Activated CD4-positive, alpha-beta memory T cell treated with anti-CD3 and anti-CD28 coated beads, Interleukin-2, amount 10 ng/mL, durations not matched to agents 7 days and 5 days (primary cell): ENCODE measurements at regions of chr1 and their contacts with region 1.

Region 1: GRCh38 chr1:67760030-67760821 is 73.0 kb downstream of the GNG12 start:
- DNase-seq: peak; percentile 56
- H3K4me3 Mint-ChIP-seq: no peak overlapping the region
- H3K27ac Mint-ChIP-seq: no peak overlapping the region
- H3K4me1 Mint-ChIP-seq: no peaks in the 10 kb centered on the region
- H3K27me3 Mint-ChIP-seq: peaks cover 29% of the 10 kb centered on the region

Region 2: GRCh38 chr1:67535474-67535873 is 224.8 kb before region 1 on chr1:
- CTCF ChIA-PET with region 1: interaction called, 61 read pairs
- POLR2A ChIA-PET with region 1: interaction called, 4 read pairs
- DNase-seq: peak; percentile 60
- H3K4me3 Mint-ChIP-seq: no peak overlapping the region
- H3K27ac Mint-ChIP-seq: no peak overlapping the region
- H3K4me1 Mint-ChIP-seq: peaks cover 6% of the 10 kb centered on the region
- H3K27me3 Mint-ChIP-seq: no peaks in the 10 kb centered on the region

Region 3: GRCh38 chr1:67674260-67675011 is 85.8 kb before region 1 on chr1:
- CTCF ChIA-PET with region 1: interaction called, 10 read pairs
- POLR2A ChIA-PET with region 1: no interaction called
- DNase-seq: peak; percentile 58
- H3K4me3 Mint-ChIP-seq: no peak overlapping the region
- H3K27ac Mint-ChIP-seq: peak overlapping the region; percentile 63
- H3K4me1 Mint-ChIP-seq: peaks cover 23% of the 10 kb centered on the region
- H3K27me3 Mint-ChIP-seq: peaks cover 26% of the 10 kb centered on the region

Region 4: DNA sequence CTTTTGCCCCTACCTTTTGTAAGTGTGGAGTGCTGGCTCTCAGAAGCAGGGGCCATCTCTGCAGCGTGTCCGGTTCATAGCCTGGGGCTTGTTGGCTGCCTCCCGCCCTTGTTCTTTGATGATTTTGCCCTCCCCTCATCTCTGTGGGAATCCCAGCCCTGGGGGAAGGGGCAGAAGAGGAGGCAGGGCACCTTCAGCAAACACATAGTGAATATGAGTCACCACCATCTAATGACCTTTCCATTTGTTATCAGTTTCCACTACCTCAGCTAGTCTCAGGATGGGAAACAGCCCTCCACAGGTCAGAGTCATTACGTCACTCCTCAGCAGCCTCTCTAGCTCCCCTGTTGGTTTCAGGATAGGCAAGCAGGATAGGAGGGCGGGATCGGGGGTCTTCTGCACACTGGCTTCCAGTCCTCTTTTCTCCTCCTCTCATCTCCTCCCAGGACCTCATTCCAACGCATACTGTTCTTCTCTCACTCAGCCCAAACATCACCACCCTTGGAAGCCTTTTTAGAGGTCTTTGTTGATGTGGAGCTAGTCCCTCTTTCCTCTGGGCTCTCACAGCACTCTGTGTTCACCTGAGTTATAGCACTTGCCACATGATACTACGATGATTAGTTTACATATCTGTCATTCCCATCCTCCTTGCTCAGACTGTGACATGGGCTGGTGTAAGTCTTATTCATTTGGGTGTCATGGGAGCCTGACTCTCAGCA is 59.4 kb before region 1 on chr1:
- CTCF ChIA-PET with region 1: interaction called, 11 read pairs
- POLR2A ChIA-PET with region 1: no interaction called
- DNase-seq: no peak
- H3K4me3 Mint-ChIP-seq: no peak overlapping the region
- H3K27ac Mint-ChIP-seq: no peak overlapping the region
- H3K4me1 Mint-ChIP-seq: peaks cover 2% of the 10 kb centered on the region
- H3K27me3 Mint-ChIP-seq: peaks cover 1% of the 10 kb centered on the region